ENCODE measurements at regions of chr17 and their contacts with region 1.

Region 1: GRCh38 chr17:82551779-82552457 is 32.4 kb downstream of the FOXK2 start:
- DNase-seq: peak; percentile 79
- H3K4me3 Mint-ChIP-seq: no peak overlapping the region
- H3K27ac Mint-ChIP-seq: peak overlapping the region; percentile 72
- H3K4me1 Mint-ChIP-seq: peaks cover 23% of the 10 kb centered on the region
- H3K27me3 Mint-ChIP-seq: no peaks in the 10 kb centered on the region
- CTCF ChIP-seq: peak; percentile 74

Region 2: GRCh38 chr17:82372249-82373071 is 179.5 kb before region 1 on chr17:
- CTCF ChIA-PET with region 1: no interaction called
- POLR2A ChIA-PET with region 1: no interaction called
- intact Hi-C with region 1: no loop called
- DNase-seq: no peak
- H3K4me3 Mint-ChIP-seq: no peak overlapping the region
- H3K27ac Mint-ChIP-seq: no peak overlapping the region
- H3K4me1 Mint-ChIP-seq: no peaks in the 10 kb centered on the region
- H3K27me3 Mint-ChIP-seq: peaks cover 10% of the 10 kb centered on the region
- CTCF ChIP-seq: no peak

Region 3: GRCh38 chr17:82384730-82385481 is 167.0 kb before region 1 on chr17:
- CTCF ChIA-PET with region 1: interaction called, 3 read pairs
- POLR2A ChIA-PET with region 1: no interaction called
- intact Hi-C with region 1: loop called (anchors 10 kb)
- DNase-seq: peak; percentile 73
- H3K4me3 Mint-ChIP-seq: no peak overlapping the region
- H3K27ac Mint-ChIP-seq: no peak overlapping the region
- H3K4me1 Mint-ChIP-seq: peaks cover 15% of the 10 kb centered on the region
- H3K27me3 Mint-ChIP-seq: peaks cover 30% of the 10 kb centered on the region
- CTCF ChIP-seq: peak; percentile 28

Region 4: GRCh38 chr17:82418001-82418986 is 133.6 kb before region 1 on chr17 and contains the starts of genes HEXD and OGFOD3:
- CTCF ChIA-PET with region 1: interaction called, 8 read pairs
- POLR2A ChIA-PET with region 1: interaction called, 4 read pairs
- intact Hi-C with region 1: loop called (anchors 10 kb)
- DNase-seq: peak; percentile 78
- H3K4me3 Mint-ChIP-seq: peak within 1 kb of the TSS; percentile 71
- H3K27ac Mint-ChIP-seq: no peak within 1 kb of the TSS
- H3K4me1 Mint-ChIP-seq: no peaks in the 10 kb centered on the region
- H3K27me3 Mint-ChIP-seq: no peaks in the 10 kb centered on the region
- CTCF ChIP-seq: no peak
- total RNA-seq, gene HEXD: 14.8 and 16.2 TPM in 2 replicates
- total RNA-seq, gene OGFOD3: 16.5 and 21.1 TPM in 2 replicates

Region 5: DNA sequence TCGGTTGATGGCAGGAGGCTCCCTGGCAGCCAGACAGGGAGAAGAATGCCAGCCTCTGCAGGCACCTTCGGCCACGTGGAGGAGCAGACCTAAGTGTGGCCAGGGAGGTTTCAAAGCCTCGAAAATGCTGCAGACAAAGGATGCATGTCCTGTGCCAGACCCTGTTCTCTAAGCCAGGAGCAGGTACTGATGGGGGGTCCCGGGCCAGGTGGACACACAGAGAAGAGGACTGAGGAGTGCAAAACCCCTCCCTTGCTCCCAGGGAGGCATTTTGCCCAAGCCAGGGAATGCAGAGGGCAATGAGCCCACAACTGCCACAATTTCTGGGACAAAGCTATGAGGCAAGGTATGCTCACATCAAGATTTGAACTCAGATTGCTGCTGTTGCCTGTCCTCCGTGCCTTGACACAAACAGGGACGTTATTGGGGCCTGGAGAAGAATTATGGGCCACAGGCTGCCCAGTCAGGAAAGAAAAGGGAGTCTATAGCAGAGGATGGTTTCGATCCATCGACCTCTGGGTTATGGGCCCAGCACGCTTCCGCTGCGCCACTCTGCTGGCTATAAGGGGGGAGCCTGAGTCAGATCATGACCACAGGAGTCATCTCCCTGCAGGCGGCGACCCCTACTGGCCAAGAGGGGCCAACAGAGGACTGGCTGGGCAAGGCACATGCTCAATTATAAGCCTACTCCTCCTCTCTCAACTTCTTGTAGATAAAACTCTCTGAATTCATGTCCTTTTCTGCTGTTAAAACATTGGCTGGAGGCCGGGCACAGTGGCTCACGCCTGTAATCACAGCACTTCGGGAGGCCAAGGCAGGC is 57.5 kb before region 1 on chr17:
- CTCF ChIA-PET with region 1: interaction called, 7 read pairs
- POLR2A ChIA-PET with region 1: interaction called, 9 read pairs
- intact Hi-C with region 1: loop called (anchors 2 kb)
- DNase-seq: peak; percentile 96
- H3K4me3 Mint-ChIP-seq: no peak overlapping the region
- H3K27ac Mint-ChIP-seq: peak overlapping the region; percentile 87
- H3K4me1 Mint-ChIP-seq: peaks cover 39% of the 10 kb centered on the region
- H3K27me3 Mint-ChIP-seq: no peaks in the 10 kb centered on the region
- CTCF ChIP-seq: peak; percentile 98

Region 6: GRCh38 chr17:82536512-82537201 is 15.3 kb before region 1 on chr17:
- CTCF ChIA-PET with region 1: interaction called, 28 read pairs
- POLR2A ChIA-PET with region 1: interaction called, 36 read pairs
- intact Hi-C with region 1: no loop called
- DNase-seq: peak; percentile 72
- H3K4me3 Mint-ChIP-seq: peak overlapping the region; percentile 60
- H3K27ac Mint-ChIP-seq: peak overlapping the region; percentile 97
- H3K4me1 Mint-ChIP-seq: peaks cover 53% of the 10 kb centered on the region
- H3K27me3 Mint-ChIP-seq: no peaks in the 10 kb centered on the region
- CTCF ChIP-seq: no peak

Region 7: DNA sequence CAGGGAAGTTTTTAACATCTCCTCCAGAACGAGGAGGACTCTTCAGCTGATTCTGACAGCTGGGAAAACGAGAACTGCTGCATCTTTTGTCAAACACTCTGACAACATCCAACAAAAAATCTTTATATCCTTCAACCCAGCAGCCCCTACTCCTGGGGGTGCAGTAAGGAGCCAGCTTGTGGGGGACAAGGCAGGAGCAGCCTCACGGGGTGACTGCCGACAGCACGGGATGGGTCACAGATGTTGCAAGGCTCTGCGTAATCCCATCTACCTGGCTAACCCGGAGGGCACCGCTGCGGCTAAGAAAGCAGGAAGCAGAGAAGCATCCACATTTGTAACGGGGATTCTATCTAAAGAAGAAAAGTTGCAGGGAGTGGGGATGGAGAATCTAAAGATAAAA is 67.7 kb after region 1 on chr17:
- CTCF ChIA-PET with region 1: no interaction called
- POLR2A ChIA-PET with region 1: no interaction called
- intact Hi-C with region 1: no loop called
- DNase-seq: no peak
- H3K4me3 Mint-ChIP-seq: no peak overlapping the region
- H3K27ac Mint-ChIP-seq: no peak overlapping the region
- H3K4me1 Mint-ChIP-seq: no peaks in the 10 kb centered on the region
- H3K27me3 Mint-ChIP-seq: no peaks in the 10 kb centered on the region
- CTCF ChIP-seq: no peak

Measured in MCF 10A (cell line).